A673 (cell line): ENCODE measurements at regions of chr1 and their contacts with region 1.

Region 1: GRCh38 chr1:14894811-14895560 is 258.6 kb upstream of the TMEM51 start:
- DNase-seq: peak; percentile 79
- H3K4me3 ChIP-seq: no peak overlapping the region
- H3K27ac ChIP-seq: no peak overlapping the region
- H3K4me1 ChIP-seq: peaks cover 16% of the 10 kb centered on the region
- H3K27me3 ChIP-seq: no peaks in the 10 kb centered on the region
- CTCF ChIP-seq: no peak

Region 2: GRCh38 chr1:14778898-14779865 is 115.8 kb before region 1 on chr1:
- CTCF ChIA-PET with region 1: no interaction called
- POLR2A ChIA-PET with region 1: no interaction called
- intact Hi-C with region 1: no loop called
- DNase-seq: peak; percentile 55
- H3K4me3 ChIP-seq: no peak overlapping the region
- H3K27ac ChIP-seq: no peak overlapping the region
- H3K4me1 ChIP-seq: no peaks in the 10 kb centered on the region
- H3K27me3 ChIP-seq: no peaks in the 10 kb centered on the region
- CTCF ChIP-seq: peak; percentile 83

Region 3: GRCh38 chr1:15038232-15039016 is 143.4 kb after region 1 on chr1:
- CTCF ChIA-PET with region 1: interaction called, 16 read pairs
- POLR2A ChIA-PET with region 1: no interaction called
- intact Hi-C with region 1: no loop called
- DNase-seq: peak; percentile 57
- H3K4me3 ChIP-seq: no peak overlapping the region
- H3K27ac ChIP-seq: no peak overlapping the region
- H3K4me1 ChIP-seq: no peaks in the 10 kb centered on the region
- H3K27me3 ChIP-seq: no peaks in the 10 kb centered on the region
- CTCF ChIP-seq: peak; percentile 56

Region 4: DNA sequence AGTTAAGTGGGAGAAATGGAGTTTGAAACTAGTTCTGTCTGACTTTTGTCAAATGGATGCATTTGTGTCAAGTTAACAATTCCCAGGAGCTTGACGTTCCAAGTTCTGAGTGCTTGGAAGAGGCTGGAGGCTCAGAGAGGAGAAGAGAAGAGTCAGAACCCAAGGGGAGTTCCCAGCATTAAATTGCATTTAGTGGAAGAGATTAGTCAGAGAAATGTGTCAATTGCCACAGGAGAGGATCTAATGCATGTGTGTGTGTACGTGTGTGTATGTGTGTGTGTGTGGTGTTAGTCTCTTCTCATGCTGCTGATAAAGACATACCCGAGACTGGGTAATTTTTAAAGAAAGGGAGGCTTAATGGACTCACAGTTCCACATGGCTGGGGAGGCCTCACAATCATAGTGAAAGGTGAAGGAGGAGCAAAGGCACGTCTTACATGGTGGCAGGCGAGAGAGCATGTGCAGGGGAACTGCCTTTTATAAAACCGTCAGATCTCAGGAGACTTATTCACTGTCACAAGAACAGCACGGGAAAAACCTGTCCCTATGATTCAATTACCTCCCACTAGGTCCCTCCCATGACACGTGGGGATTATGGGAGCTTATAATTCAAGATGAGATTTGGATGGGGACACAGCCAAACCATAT is 157.0 kb after region 1 on chr1:
- CTCF ChIA-PET with region 1: no interaction called
- POLR2A ChIA-PET with region 1: no interaction called
- intact Hi-C with region 1: no loop called
- DNase-seq: no peak
- H3K4me3 ChIP-seq: no peak overlapping the region
- H3K27ac ChIP-seq: no peak overlapping the region
- H3K4me1 ChIP-seq: no peaks in the 10 kb centered on the region
- H3K27me3 ChIP-seq: no peaks in the 10 kb centered on the region
- CTCF ChIP-seq: no peak

Region 5: GRCh38 chr1:15489052-15489736 is 594.2 kb after region 1 on chr1:
- CTCF ChIA-PET with region 1: no interaction called
- POLR2A ChIA-PET with region 1: no interaction called
- intact Hi-C with region 1: no loop called
- DNase-seq: no peak
- H3K4me3 ChIP-seq: no peak overlapping the region
- H3K27ac ChIP-seq: no peak overlapping the region
- H3K4me1 ChIP-seq: no peaks in the 10 kb centered on the region
- H3K27me3 ChIP-seq: no peaks in the 10 kb centered on the region
- CTCF ChIP-seq: no peak